ENCODE measurements at regions of chr3 and their contacts with region 1.

Region 1: GRCh38 chr3:119676771-119677640 is at the start of gene COX17:
- DNase-seq: peak; percentile 71
- H3K4me3 ChIP-seq: peak within 1 kb of the TSS; percentile 74
- CTCF ChIP-seq: no peak

Region 2: GRCh38 chr3:119240591-119241434 is 436.2 kb before region 1 on chr3 and contains the start of gene B4GALT4:
- CTCF ChIA-PET with region 1: interaction called, 16 read pairs
- POLR2A ChIA-PET with region 1: no interaction called
- DNase-seq: no peak
- H3K4me3 ChIP-seq: peak within 1 kb of the TSS; percentile 79
- CTCF ChIP-seq: no peak

Region 3: GRCh38 chr3:119443179-119443578 is 233.8 kb before region 1 on chr3:
- CTCF ChIA-PET with region 1: interaction called, 15 read pairs
- POLR2A ChIA-PET with region 1: no interaction called
- DNase-seq: no peak
- H3K4me3 ChIP-seq: no peak overlapping the region
- CTCF ChIP-seq: no peak

Region 4: GRCh38 chr3:119498186-119498987 is 178.6 kb before region 1 on chr3 and contains the start of gene TIMMDC1:
- CTCF ChIA-PET with region 1: interaction called, 13 read pairs
- POLR2A ChIA-PET with region 1: no interaction called
- DNase-seq: peak; percentile 80
- H3K4me3 ChIP-seq: peak within 1 kb of the TSS; percentile 98
- CTCF ChIP-seq: no peak

Region 5: GRCh38 chr3:119690043-119690656 is 13.1 kb after region 1 on chr3:
- CTCF ChIA-PET with region 1: interaction called, 20 read pairs
- POLR2A ChIA-PET with region 1: no interaction called
- DNase-seq: no peak
- H3K4me3 ChIP-seq: no peak overlapping the region
- CTCF ChIP-seq: peak; percentile 31

Measured in AG04449 (cell line).